ENCODE measurements at regions of chr4 and their contacts with region 1.

Region 1: DNA sequence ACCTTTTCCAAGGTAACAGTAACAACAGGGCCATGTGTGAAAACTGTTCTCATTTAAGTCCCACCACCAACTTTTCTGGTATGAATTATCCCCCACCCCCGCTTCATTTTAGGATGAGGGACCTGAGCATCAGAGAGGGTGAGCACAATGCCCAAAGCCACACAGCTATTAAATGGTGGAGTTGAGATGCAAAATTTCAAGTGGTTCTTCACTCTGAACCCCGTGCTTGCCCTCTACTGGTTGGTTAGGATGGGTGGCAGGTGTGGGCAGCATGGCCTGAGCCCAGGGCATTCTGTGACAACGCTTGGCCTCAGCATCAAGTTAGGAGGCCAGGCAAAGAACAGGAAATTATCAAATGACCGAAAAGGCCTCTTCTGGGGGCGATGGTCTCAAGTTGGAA is 33.5 kb downstream of the MED28 start:
- DNase-seq: no peak
- H3K4me3 ChIP-seq: no peak overlapping the region
- H3K27ac ChIP-seq: no peak overlapping the region
- H3K4me1 ChIP-seq: no peaks in the 10 kb centered on the region
- H3K27me3 ChIP-seq: no peaks in the 10 kb centered on the region

Region 2: GRCh38 chr4:17092736-17093437 is 555.0 kb before region 1 on chr4:
- in situ Hi-C with region 1: no loop called
- DNase-seq: no peak
- H3K4me3 ChIP-seq: no peak overlapping the region
- H3K27ac ChIP-seq: no peak overlapping the region
- H3K4me1 ChIP-seq: peaks cover 25% of the 10 kb centered on the region
- H3K27me3 ChIP-seq: no peaks in the 10 kb centered on the region

Region 3: DNA sequence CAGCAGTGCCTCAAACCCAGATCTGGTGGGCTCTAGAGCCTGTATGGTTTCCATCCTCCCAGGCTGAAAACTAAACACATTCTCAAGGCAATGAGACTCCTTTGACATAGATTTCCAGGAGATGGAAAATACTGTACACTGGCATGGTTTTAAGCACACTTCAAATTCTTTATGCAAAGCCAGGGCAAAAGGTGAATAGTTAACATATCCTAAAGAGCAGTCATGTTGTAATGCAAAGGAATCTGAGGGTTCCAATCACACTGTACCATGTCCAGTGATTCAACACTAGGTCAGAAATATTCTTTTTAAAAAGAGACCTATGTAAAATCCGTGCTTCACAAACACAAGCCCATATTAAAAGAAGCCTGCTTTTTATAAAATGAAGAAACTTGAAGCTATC is 331.4 kb before region 1 on chr4:
- in situ Hi-C with region 1: no loop called
- DNase-seq: no peak
- H3K4me3 ChIP-seq: no peak overlapping the region
- H3K27ac ChIP-seq: no peak overlapping the region
- H3K4me1 ChIP-seq: peaks cover 12% of the 10 kb centered on the region
- H3K27me3 ChIP-seq: no peaks in the 10 kb centered on the region

Region 4: GRCh38 chr4:17781300-17782287 is 133.7 kb after region 1 on chr4 and contains the start of gene FAM184B:
- in situ Hi-C with region 1: loop called (anchors 10 kb)
- DNase-seq: peak; percentile 42
- H3K4me3 ChIP-seq: peak within 1 kb of the TSS; percentile 76
- H3K27ac ChIP-seq: no peak within 1 kb of the TSS
- H3K4me1 ChIP-seq: peaks cover 5% of the 10 kb centered on the region; the same call in 1 of the 2 replicates
- H3K27me3 ChIP-seq: peaks cover 19% of the 10 kb centered on the region
- total RNA-seq, gene FAM184B: not detected in 2 replicates